ENCODE measurements at regions of chr10 and their contacts with region 1.

Region 1: DNA sequence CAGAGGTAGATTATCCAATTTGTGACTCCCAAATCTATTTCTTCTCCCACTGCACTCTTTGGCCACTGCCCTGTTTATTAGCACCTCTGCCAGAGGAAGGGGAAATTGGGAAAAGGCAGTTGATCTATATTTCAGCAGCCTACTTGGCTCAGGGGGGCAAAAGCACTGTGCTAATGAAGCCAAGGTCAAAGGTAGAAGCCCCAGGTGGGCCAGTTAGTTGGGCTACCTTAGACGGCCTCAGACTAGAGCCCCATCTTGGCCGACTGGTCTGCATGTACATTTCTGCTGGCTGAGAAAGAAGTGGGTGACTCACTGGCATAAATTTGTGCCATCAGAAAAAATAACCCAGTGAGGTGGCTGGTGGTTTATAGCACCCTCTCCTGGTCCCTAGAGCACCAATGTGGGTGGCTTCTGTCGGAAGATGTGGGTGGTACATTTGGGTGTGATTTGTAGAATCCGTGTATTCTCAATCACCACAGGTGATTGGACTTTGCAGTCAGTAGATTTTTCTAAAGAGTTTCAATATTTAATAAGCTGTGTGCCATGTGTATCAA is 293.3 kb upstream of the MKI67 start:
- DNase-seq: peak in 1 of 2 donors; percentile 22
- ATAC-seq: peak; percentile 89 to 90
- H3K4me3 ChIP-seq: no peak overlapping the region
- H3K27ac ChIP-seq: no peak overlapping the region
- H3K4me1 ChIP-seq: no peaks in the 10 kb centered on the region
- H3K27me3 ChIP-seq: no peaks in the 10 kb centered on the region
- CTCF ChIP-seq: peak; percentile 10 to 44 (median 34)
- POLR2A ChIP-seq: no peak

Region 2: GRCh38 chr10:128167926-128168520 is 251.5 kb before region 1 on chr10:
- in situ Hi-C with region 1: no loop called
- intact Hi-C with region 1: no loop called
- DNase-seq: no peak
- ATAC-seq: no peak
- H3K4me3 ChIP-seq: no peak overlapping the region
- H3K27ac ChIP-seq: no peak overlapping the region
- H3K4me1 ChIP-seq: no peaks in the 10 kb centered on the region
- H3K27me3 ChIP-seq: peaks cover 0 to 3% (median 0%) of the 10 kb centered on the region in 3 donors
- CTCF ChIP-seq: no peak
- POLR2A ChIP-seq: no peak

Region 3: DNA sequence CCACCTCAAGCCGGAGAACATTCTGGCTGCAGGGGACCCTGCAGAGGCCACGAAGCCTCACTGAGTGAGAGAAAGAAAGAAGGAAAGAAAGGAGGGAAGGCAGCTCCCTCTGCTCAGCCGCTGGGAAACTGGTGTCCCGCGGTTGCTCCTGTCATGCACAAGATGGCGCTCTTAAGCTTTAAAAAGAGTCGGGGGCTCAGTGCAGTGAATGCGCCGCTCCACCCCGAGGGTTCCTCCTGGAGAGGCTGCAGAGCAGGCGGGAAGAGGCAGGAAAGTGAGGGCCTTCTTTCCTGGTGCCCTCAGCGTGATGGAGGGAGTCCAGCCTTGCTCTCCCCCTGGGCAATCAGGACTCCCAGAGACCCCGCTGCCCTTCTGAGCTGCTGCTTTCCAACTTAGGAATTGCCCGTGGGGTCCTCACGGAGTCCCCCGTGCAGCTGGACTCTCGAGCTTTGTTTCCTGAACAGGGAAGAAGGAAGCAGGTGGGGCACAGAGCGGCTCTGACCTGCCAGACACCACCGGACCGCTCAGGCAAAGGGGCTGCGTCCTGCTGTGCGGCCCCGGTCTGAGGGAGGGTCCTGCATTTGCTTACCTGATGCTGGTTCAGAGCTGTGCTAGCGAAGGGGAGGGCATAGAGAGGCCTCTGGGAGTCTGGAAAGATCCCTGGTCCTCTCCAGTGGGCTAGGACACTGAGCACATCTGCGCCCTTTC is 151.4 kb before region 1 on chr10:
- in situ Hi-C with region 1: no loop called
- intact Hi-C with region 1: loop called (anchors 5 kb)
- DNase-seq: no peak
- ATAC-seq: no peak
- H3K4me3 ChIP-seq: no peak overlapping the region
- H3K27ac ChIP-seq: no peak overlapping the region
- H3K4me1 ChIP-seq: no peaks in the 10 kb centered on the region
- H3K27me3 ChIP-seq: peaks cover 0 to 6% (median 0%) of the 10 kb centered on the region in 3 donors
- CTCF ChIP-seq: no peak
- POLR2A ChIP-seq: no peak

Measured in gastrocnemius medialis (tissue), 4 donors.